ENCODE measurements at regions of chr17 and their contacts with region 1.

Region 1: DNA sequence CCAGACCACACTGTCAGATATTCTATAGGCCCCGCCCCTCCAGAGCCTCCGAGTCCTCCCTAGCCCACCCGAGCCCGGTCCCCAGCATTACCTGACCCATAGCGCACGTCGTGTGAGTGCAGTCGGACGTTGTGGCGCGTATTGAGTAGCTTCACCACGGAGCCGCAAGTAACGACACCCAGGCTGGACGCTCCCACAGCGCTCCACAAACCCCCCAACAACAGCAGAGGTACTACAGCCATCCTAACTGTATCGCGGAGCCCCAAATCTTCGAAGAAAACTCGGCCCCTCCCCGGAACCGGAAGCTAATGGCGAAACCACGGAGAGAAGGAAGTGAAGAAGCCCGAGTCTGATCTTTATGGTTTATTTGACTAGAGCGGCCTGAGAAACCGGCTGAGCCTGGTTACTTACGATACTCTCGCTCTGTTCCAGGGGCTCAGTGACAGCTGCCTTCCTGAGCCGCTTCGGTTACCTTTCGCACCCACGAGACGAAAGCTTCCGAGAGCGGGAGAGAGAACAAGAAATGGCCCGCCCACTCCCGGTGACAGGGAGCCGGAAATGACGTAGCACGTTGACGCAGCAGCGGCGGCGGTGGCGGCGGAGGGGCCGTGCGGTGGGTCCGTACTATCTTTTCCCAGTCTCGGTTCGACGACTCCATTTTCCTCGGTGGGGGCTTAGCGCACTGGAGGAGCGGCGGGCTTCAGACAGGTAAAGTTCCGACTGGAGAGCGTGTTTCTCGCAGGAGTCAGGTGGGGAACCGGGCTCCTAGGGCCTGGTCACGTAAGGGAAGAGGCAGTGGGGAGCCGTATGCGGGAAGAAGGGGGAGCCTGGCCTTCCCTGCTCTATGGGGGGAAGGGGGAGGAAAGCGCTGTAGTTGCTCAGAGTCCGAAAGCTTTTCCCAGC is at the starts of genes SDF2 and SUPT6H:
- DNase-seq: peak; percentile 90
- H3K4me3 Mint-ChIP-seq: peak within 1 kb of the TSS; percentile 100
- H3K27ac Mint-ChIP-seq: peak within 1 kb of the TSS; percentile 99
- H3K4me1 Mint-ChIP-seq: peaks cover 53% of the 10 kb centered on the region
- H3K27me3 Mint-ChIP-seq: no peaks in the 10 kb centered on the region
- total RNA-seq, gene SDF2: 47.9 and 51.0 TPM in 2 replicates
- total RNA-seq, gene SUPT6H: 106 and 108 TPM in 2 replicates

Region 2: DNA sequence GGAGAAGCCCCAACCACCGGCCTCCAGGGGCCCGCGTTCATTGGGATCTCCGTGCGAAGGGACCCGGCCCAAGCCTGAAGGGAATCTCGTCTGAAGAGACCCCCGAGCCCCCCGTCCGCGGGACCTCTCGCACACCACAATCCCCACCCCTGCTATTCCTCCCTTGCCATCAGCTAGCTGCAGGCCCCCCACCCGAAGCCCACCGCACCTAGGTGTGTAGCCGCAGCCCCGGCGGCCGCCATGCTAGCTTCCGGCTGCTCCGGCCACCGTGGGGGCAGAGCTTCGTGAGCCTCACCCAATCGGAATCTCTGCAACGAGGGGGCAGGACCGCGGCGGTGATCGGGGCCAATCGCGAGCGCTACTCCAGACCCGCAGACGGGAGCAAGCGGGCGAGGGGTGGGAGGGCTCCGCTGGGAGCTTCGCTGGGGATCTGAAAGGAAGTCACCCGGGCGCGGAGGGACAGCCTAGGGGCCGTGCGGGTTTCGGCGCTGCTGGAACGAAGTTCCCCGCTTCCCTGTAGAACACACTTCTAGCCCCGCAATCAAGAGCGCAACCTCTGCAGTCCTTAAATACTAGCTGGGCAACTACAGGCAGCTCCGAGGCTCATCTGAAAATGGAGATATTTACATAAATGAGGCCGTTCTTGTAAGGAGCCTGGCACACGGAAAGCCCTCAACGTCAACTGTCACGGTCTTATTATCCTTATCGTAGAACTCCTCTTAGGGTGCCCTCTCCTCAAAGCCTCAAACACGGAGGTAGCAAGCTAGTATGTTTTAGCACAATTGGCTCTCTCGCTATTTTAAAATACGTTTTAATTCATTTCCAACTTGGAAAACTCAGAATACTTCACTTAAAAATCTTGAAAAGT is 90.4 kb before region 1 on chr17 and contains the start of gene PIGS:
- intact Hi-C with region 1: loop called (anchors 5 kb)
- DNase-seq: peak; percentile 91
- H3K4me3 Mint-ChIP-seq: peak within 1 kb of the TSS; percentile 94
- H3K27ac Mint-ChIP-seq: peak within 1 kb of the TSS; percentile 88
- H3K4me1 Mint-ChIP-seq: peaks cover 81% of the 10 kb centered on the region
- H3K27me3 Mint-ChIP-seq: no peaks in the 10 kb centered on the region
- total RNA-seq, gene PIGS: 57.8 and 61.2 TPM in 2 replicates

Region 3: DNA sequence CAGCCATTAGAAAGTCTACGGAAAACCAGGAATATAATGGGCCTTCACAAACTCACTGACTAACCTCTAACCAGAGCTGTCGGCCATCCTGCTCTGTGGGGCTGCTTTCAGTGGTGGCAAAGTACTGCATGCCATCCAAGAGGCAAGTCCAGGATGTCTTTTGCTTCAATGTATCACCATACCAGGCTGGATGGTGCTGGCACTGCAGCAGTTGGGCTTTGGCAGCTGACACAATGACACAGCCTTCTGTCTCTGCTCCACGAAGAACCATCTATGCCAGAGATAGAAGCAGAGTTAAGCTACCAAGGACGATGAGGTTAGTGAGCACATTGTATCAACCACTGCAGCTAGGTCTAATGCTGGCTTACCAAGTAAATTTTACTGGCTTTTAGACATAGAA is 38.2 kb before region 1 on chr17:
- intact Hi-C with region 1: no loop called
- DNase-seq: no peak
- H3K4me3 Mint-ChIP-seq: no peak overlapping the region
- H3K27ac Mint-ChIP-seq: no peak overlapping the region
- H3K4me1 Mint-ChIP-seq: peaks cover 24% of the 10 kb centered on the region
- H3K27me3 Mint-ChIP-seq: no peaks in the 10 kb centered on the region

Region 4: DNA sequence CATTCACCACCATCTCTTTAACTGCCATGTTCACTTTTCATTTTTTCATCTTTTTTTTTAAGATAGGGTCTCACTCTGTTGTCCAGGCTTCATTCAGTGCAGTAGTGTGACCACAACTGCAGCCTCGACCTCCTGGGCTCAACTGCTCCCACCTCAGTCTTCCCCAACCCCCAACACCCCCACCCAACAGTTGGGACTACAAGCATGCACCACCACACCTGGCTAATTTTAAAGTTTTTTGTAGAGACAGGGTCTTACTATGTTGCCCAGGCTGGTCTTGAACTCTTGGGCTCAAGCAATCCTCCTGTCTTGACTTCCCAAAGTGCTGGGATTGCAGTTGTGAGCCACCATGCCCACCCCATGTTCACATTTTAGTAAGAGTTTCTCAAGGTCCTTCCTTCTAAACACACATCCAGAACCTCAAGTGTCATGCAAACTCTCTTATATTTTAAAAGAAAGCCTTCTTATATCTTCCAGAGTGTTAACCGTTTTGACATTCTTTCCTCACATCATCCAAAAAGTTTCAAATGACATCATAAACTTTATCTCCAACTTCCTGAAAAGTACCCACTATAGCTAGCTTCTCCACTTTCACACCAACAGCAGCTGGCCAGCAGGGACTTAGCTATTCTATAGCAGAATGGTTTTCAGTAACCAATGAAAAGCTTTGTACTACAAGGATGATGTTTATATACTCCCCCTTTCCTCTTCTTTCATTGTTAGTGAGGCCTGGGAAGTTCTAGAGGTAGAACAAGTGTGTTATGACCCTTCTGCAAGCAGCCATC is 131.2 kb after region 1 on chr17:
- intact Hi-C with region 1: no loop called
- DNase-seq: no peak
- H3K4me3 Mint-ChIP-seq: no peak overlapping the region
- H3K27ac Mint-ChIP-seq: no peak overlapping the region
- H3K4me1 Mint-ChIP-seq: peaks cover 20% of the 10 kb centered on the region
- H3K27me3 Mint-ChIP-seq: no peaks in the 10 kb centered on the region

Measured in activated T-helper 1 cell treated with anti-CD3 and anti-CD28 coated beads, Interleukin-12 subunit alpha, Interleukin-12 subunit beta, Interleukin-2, Interleukin-4 antibody, amounts not matched to agents 30 ng/mL and 10 ng/mL and 1 ng/mL, durations not matched to agents 14 hours and 24 hours and 36 hours (primary cell).